ENCODE measurements at regions of chr12 and their contacts with region 1.

Region 1: DNA sequence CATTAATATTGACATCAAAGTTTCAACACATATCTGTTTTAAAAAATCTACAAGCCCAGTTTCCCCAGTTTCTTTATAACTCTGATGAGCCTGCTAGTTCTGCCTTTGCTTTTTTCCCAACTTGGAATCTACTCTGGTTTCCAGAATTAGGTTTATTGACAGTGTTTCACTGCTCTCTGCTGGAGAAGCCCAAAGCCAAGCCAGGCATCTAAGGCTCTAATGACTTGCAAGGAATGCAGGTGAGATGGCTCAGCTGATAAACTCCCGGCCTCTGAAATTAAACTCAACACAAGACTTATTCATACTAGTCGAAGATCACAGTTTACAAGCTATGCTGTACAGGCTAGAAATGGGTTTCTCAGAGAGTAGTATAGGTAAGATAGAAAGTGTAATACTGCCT is 54.3 kb downstream of the HMGA2 start:
- DNase-seq: peak; percentile 47 to 68
- H3K4me3 ChIP-seq: no peak overlapping the region
- H3K27ac ChIP-seq: no peak overlapping the region
- H3K4me1 ChIP-seq: peaks cover 37 to 59% of the 10 kb centered on the region in 2 donors
- H3K27me3 ChIP-seq: no peaks in the 10 kb centered on the region
- CTCF ChIP-seq: peak in 4 of 6 experiments; percentile 46 to 59 (median 52)
- POLR2A ChIP-seq: no peak

Region 2: GRCh38 chr12:65602610-65603295 is 275.8 kb before region 1 on chr12:
- intact Hi-C with region 1: loop called (anchors 10 kb)
- DNase-seq: peak; percentile 72 to 79
- H3K4me3 ChIP-seq: no peak overlapping the region
- H3K27ac ChIP-seq: peak overlapping the region in 1 of 3 donors; percentile 57
- H3K4me1 ChIP-seq: peaks cover 15 to 16% of the 10 kb centered on the region in 2 donors
- H3K27me3 ChIP-seq: no peaks in the 10 kb centered on the region
- CTCF ChIP-seq: peak in 4 of 6 experiments; percentile 52 to 66 (median 55)
- POLR2A ChIP-seq: no peak

Region 3: GRCh38 chr12:65656904-65657351 is 221.6 kb before region 1 on chr12:
- intact Hi-C with region 1: no loop called
- DNase-seq: no peak
- H3K4me3 ChIP-seq: no peak overlapping the region
- H3K27ac ChIP-seq: no peak overlapping the region
- H3K4me1 ChIP-seq: no peaks in the 10 kb centered on the region
- H3K27me3 ChIP-seq: no peaks in the 10 kb centered on the region
- CTCF ChIP-seq: no peak
- POLR2A ChIP-seq: no peak

Region 4: DNA sequence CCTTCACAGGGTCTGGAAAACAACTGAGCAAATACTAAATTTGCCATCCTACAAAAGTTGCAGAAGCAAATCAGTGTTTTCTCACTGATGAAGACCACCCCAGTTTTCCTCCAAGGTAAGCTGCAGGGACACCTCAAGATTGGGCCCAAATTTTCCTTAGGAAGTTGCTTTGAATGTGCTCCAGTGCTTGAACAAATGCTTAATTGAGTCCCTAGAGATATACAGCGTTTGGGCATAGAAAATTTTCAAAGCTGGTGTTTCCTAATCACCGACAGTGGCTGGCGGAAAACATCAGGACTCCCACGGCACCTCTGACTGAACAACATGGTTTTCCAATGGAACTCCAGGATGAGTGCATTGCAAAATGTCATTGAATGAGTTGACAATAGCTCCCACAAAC is 146.8 kb before region 1 on chr12:
- intact Hi-C with region 1: no loop called
- DNase-seq: no peak
- H3K4me3 ChIP-seq: no peak overlapping the region
- H3K27ac ChIP-seq: no peak overlapping the region
- H3K4me1 ChIP-seq: peaks cover 7 to 9% of the 10 kb centered on the region in 2 donors
- H3K27me3 ChIP-seq: peaks cover 14% of the 10 kb centered on the region
- CTCF ChIP-seq: no peak
- POLR2A ChIP-seq: no peak

Measured in thyroid gland (tissue), 4 donors.